MCF 10A (cell line): ENCODE measurements at regions of chr11 and their contacts with region 1.

Region 1: DNA sequence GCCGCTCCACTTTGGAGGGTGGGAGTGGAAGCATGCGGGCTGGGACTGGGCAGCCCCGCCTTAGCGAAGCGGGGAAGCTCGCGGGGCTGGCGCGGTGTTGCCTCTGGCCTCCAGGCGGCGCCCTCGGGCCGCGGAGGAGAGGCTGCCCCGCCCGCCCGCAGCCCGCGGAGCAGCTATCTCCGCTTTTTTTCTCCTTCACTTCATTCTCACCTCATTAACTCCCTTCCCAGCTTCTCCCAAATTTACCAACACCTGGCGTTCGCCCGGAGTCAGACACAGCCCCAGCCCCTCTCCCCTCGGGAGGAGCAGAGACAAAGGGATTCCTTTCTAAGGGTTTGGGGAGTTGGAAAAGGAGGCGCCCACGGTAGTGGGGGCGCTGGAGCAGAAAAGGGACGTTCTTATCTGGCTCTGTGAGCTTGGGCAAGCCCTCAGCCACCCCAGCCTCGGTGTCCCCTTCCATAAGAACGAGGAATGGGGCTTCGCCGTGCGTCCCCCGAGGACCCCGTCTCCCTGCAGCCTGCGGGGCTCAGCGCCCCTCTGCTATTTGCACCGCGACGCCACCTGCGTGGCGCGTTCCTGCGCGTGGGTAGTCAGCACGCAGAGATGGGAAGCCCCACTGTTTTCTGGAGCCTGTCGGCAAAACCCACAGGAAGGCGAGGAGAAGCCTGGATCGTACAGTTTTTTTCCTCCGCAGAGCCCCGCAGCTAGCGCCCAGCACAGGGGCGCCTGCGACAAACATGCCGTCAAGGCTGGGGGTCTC is 1.5 kb upstream of the WNT11 start:
- DNase-seq: peak; percentile 78
- H3K4me3 Mint-ChIP-seq: peak overlapping the region; percentile 69
- H3K27ac Mint-ChIP-seq: no peak overlapping the region
- H3K4me1 Mint-ChIP-seq: no peaks in the 10 kb centered on the region
- H3K27me3 Mint-ChIP-seq: no peaks in the 10 kb centered on the region
- CTCF ChIP-seq: peak; percentile 90

Region 2: DNA sequence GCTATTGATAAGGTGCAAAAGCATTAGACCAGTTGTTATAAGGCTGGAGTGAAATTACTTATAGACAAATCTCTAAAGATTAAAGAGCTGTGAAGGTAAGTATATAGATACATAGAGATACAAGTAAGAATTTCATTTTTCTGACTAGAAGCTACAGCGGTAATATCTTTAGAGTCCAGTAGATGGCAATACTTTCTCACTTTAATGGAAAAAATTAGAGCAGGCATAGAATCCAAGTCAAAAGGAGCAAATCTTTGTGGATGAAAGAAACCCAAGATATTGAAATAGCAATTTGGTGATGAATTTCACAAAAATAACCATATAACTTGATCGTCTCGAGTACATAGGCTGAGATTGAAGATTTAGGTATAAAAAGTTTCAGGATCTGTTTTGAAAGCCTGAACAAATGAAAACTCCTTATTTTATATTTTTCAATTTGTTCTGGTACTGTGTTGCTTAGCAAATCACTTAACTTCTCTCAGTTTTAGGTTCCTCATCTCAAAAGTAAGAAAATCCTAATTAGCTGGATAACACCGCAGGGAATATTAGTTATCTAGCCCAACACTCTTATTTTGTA is 310.9 kb before region 1 on chr11:
- CTCF ChIA-PET with region 1: interaction called, 28 read pairs
- POLR2A ChIA-PET with region 1: no interaction called
- intact Hi-C with region 1: loop called (anchors 2 kb)
- DNase-seq: peak; percentile 54
- H3K4me3 Mint-ChIP-seq: no peak overlapping the region
- H3K27ac Mint-ChIP-seq: no peak overlapping the region
- H3K4me1 Mint-ChIP-seq: no peaks in the 10 kb centered on the region
- H3K27me3 Mint-ChIP-seq: no peaks in the 10 kb centered on the region
- CTCF ChIP-seq: peak; percentile 54

Region 3: GRCh38 chr11:76235233-76236091 is 27.6 kb after region 1 on chr11:
- CTCF ChIA-PET with region 1: interaction called, 12 read pairs
- POLR2A ChIA-PET with region 1: interaction called, 7 read pairs
- intact Hi-C with region 1: loop called (anchors 1 kb)
- DNase-seq: peak; percentile 92
- H3K4me3 Mint-ChIP-seq: peak overlapping the region; percentile 99
- H3K27ac Mint-ChIP-seq: peak overlapping the region; percentile 85
- H3K4me1 Mint-ChIP-seq: peaks cover 6% of the 10 kb centered on the region
- H3K27me3 Mint-ChIP-seq: no peaks in the 10 kb centered on the region
- CTCF ChIP-seq: no peak

Region 4: GRCh38 chr11:76307396-76307795 is 99.6 kb after region 1 on chr11:
- CTCF ChIA-PET with region 1: interaction called, 271 read pairs
- POLR2A ChIA-PET with region 1: no interaction called
- intact Hi-C with region 1: no loop called
- DNase-seq: no peak
- H3K4me3 Mint-ChIP-seq: no peak overlapping the region
- H3K27ac Mint-ChIP-seq: no peak overlapping the region
- H3K4me1 Mint-ChIP-seq: no peaks in the 10 kb centered on the region
- H3K27me3 Mint-ChIP-seq: peaks cover 1% of the 10 kb centered on the region
- CTCF ChIP-seq: no peak

Region 5: DNA sequence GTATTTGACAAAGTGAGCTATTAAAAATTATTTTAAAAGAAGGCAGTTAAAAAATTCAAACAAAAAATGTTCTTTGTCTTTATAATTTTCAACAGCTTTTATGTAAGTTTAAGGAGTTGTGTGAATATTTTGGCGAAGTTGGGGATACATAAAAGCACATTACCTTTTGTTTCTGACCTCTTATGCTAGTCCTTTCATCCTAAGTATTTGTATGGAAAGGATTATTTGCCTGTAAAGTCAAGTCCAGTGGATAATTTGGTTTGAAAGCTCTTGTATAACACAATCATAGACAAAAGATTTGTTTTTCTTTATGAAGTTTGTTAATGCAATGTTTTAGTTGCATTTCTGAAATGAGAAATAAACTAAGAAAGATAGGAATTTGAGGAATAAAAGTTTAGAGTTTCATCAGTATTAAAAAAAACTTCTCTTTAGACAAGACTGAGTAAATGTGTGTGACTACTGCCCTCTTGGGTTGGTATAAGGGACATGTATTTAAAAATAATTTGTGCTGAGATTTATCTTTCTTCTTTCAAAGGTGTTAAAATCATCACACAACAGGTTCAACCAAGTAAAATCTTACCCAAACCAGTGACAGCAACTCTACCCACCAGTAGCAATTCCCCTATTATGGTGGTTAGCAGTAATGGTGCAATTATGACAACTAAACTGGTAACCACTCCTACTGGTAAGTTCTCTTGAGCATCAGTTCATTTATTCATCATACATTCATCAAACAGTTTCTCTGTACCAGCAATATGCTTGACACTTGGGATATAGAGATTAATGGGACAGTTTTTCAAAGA is 305.2 kb after region 1 on chr11:
- CTCF ChIA-PET with region 1: no interaction called
- POLR2A ChIA-PET with region 1: no interaction called
- intact Hi-C with region 1: loop called (anchors 2 kb)
- DNase-seq: peak; percentile 26
- H3K4me3 Mint-ChIP-seq: no peak overlapping the region
- H3K27ac Mint-ChIP-seq: no peak overlapping the region
- H3K4me1 Mint-ChIP-seq: no peaks in the 10 kb centered on the region
- H3K27me3 Mint-ChIP-seq: no peaks in the 10 kb centered on the region
- CTCF ChIP-seq: peak; percentile 33